Cardiac septum (tissue), 1 donor: ENCODE measurements at regions of chr22 and their contacts with region 1.

Region 1: GRCh38 chr22:21001560-21002325 is at the start of gene THAP7:
- DNase-seq: peak; percentile 97
- total RNA-seq, gene THAP7: 18.2 TPM

Region 2: DNA sequence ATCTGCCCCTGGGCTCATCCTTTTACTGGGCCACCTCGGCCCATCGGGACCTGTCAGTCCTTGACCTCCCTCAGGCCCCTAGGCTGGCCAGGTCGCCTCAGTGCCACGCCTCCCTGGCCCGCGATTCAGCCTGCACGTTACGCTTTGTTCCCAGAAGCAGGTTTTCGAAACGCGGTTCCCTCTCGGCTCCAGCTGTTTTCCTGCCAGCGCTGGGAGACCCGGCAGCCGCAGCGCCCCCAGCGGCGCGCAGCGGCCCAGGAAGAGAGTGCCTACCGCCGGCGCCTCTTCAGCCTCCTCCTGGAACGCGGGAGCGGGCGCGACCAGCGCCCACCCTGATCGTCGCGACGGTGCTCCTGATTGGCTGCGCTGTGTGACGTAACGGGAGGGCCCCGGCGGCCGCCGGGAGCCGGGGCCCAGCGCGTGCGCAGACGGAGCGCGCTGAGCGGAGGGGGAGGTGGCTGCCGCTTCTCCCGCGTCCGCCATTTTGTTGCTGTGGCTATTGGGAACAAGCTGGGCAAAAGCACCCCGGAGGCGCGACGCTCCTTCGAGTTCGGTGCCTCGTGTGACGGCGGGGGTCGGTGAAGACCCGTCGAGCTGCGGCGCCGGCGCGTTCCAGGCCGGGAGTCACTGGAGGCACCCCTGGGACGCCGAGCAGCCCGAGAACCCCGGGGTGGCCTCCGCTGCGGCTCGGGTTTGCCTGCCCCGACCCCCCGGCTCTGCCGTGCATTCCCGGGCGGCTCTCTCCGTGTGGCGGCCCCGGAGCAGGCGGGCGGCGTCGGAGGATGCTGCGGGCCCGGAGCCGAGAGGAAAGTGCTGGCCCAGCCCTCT is 84.5 kb before region 1 on chr22 and contains the start of gene CRKL:
- intact Hi-C with region 1: loop called (anchors 5 kb)
- DNase-seq: peak; percentile 99
- total RNA-seq, gene CRKL: 55.5 TPM

Region 3: DNA sequence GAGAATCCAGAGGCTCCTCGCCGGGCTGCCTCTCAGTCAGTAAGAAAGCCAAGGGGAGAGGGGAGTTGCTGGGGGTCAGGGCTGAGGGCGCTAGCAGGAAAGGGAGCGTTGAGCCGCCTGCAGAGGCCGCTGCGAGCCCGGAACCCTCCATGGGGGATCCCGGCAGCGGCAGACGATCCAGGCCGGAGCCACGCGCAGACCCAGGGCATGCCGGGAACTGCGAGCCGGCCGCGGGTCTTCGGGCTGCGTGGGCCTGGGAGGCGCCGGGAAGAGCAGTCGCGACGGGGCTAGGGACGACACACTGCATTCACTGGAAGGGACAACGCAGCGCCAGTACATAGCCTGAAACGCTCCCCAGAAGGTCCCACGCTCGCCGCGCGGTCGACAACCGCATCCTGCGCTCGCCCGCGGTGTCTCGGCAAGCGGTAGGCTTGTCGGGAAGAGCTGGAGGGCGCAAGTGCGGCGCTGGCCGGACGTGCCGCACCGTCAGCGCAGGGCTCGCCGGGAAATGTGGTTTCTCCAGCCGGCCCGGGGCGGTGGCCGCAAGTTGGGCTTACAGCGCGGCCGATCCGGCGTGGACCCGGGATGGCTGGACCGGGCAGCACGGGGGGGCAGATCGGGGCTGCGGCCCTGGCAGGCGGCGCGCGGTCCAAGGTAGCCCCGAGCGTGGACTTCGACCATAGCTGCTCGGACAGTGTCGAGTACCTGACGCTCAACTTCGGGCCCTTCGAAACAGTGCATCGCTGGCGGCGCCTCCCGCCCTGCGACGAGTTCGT is 19.8 kb before region 1 on chr22 and contains the start of gene LZTR1:
- intact Hi-C with region 1: loop called (anchors 1 kb)
- DNase-seq: peak; percentile 95
- total RNA-seq, gene LZTR1: 33.0 TPM